GM12878 (cell line): ENCODE measurements at regions of chr1 and their contacts with region 1.

Region 1: GRCh38 chr1:209190591-209191261 is 392.8 kb upstream of the CAMK1G start:
- DNase-seq: no peak
- ATAC-seq: peak; percentile 94
- H3K4me3 ChIP-seq: no peak overlapping the region
- H3K27ac ChIP-seq: no peak overlapping the region
- H3K4me1 ChIP-seq: no peaks in the 10 kb centered on the region; the same call in 1 of the 2 replicates
- H3K27me3 ChIP-seq: no peaks in the 10 kb centered on the region
- CTCF ChIP-seq: peak; percentile 74 to 81 (median 80)
- EP300 ChIP-seq: no peak
- POLR2A ChIP-seq: no peak
- RAD21 ChIP-seq: peak; percentile 89

Region 2: GRCh38 chr1:208652296-208653160 is 538.2 kb before region 1 on chr1:
- CTCF ChIA-PET with region 1: interaction called, 6 read pairs
- POLR2A ChIA-PET with region 1: no interaction called
- RAD21 ChIA-PET with region 1: no interaction called
- SMC1A ChIA-PET with region 1: interaction called, 5 read pairs
- in situ Hi-C with region 1: no loop called
- intact Hi-C with region 1: loop called (anchors 5 kb)
- DNase-seq: peak; percentile 8
- ATAC-seq: peak; percentile 94
- H3K4me3 ChIP-seq: no peak overlapping the region
- H3K27ac ChIP-seq: no peak overlapping the region
- H3K4me1 ChIP-seq: no peaks in the 10 kb centered on the region
- H3K27me3 ChIP-seq: no peaks in the 10 kb centered on the region
- CTCF ChIP-seq: peak; percentile 73 to 83 (median 77)
- EP300 ChIP-seq: no peak
- POLR2A ChIP-seq: no peak
- RAD21 ChIP-seq: peak; percentile 65

Region 3: DNA sequence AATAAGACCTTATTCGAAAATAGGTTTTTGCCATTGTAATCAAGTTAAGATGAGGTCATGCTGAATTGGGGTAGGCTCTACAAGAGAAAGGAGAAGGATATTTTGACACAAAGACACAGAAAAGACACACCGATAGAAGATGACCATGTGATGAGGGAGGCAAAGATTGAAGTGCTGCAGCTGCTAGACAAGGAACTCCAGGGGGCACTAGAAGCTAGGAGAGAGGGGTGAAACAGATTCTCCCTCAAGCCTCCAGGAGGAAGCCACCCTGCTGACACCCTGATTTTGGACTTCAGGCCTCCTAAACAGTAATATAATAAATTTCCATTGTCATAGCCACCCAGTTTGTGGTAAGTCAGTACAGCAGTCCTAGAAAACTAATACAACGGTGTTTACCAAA is 114.0 kb before region 1 on chr1:
- CTCF ChIA-PET with region 1: interaction called, 7 read pairs
- POLR2A ChIA-PET with region 1: interaction called, 6 read pairs
- RAD21 ChIA-PET with region 1: interaction called, 5 read pairs
- SMC1A ChIA-PET with region 1: interaction called, 3 read pairs
- in situ Hi-C with region 1: no loop called
- intact Hi-C with region 1: loop called (anchors 1 kb)
- DNase-seq: no peak
- ATAC-seq: peak; percentile 74
- H3K4me3 ChIP-seq: no peak overlapping the region
- H3K27ac ChIP-seq: no peak overlapping the region
- H3K4me1 ChIP-seq: no peaks in the 10 kb centered on the region
- H3K27me3 ChIP-seq: no peaks in the 10 kb centered on the region
- CTCF ChIP-seq: peak; percentile 45 to 65 (median 60)
- EP300 ChIP-seq: no peak
- POLR2A ChIP-seq: no peak
- RAD21 ChIP-seq: peak; percentile 87